BJ (cell line): ENCODE measurements at regions of chr3 and their contacts with region 1.

Region 1: DNA sequence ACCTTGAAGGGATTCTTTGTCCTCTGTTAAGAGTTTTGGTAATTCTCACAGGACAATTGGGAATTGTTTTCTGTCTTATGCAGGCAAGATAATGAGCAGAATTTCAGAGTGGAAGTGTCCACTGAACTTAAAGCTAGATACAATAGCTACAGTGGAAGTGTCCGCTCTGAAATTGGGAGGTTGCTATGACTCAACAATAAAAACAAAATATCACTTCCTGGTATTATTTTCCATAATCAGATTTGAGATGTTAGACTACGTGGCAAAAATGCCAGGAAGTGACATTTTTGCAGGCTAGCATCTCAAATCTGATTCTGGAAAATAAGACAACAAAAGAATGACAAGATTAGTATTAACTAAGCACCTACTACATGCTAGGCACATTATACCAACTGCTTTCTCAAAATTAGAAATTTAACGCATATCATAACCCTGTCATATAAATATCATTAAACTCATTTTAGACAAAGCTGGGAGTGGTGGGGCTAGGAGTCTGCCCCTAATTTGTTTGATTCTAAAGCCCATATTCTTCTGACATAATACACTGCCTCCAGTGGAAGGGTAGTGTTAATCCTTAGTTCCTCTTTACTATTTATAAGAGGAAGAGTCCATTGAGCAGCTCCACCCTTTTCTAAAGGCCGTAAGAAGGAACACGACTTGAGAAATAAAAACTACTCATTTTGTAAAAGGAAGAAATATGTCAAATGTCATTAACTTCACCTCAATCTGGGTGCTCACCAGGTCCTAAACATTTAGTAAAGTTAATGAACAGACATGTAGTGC is 266.9 kb upstream of the STT3B start:
- DNase-seq: no peak
- H3K4me3 ChIP-seq: no peak overlapping the region
- H3K27me3 ChIP-seq: no peaks in the 10 kb centered on the region
- CTCF ChIP-seq: no peak

Region 2: GRCh38 chr3:30760040-30760695 is 505.7 kb before region 1 on chr3:
- CTCF ChIA-PET with region 1: no interaction called
- POLR2A ChIA-PET with region 1: no interaction called
- DNase-seq: no peak
- H3K4me3 ChIP-seq: no peak overlapping the region
- H3K27me3 ChIP-seq: no peaks in the 10 kb centered on the region
- CTCF ChIP-seq: no peak

Region 3: GRCh38 chr3:31253782-31254181 is 12.1 kb before region 1 on chr3:
- CTCF ChIA-PET with region 1: interaction called, 10 read pairs
- POLR2A ChIA-PET with region 1: no interaction called
- DNase-seq: no peak
- H3K4me3 ChIP-seq: no peak overlapping the region
- H3K27me3 ChIP-seq: no peaks in the 10 kb centered on the region
- CTCF ChIP-seq: no peak

Region 4: GRCh38 chr3:31862666-31863279 is 596.9 kb after region 1 on chr3:
- CTCF ChIA-PET with region 1: no interaction called
- POLR2A ChIA-PET with region 1: no interaction called
- DNase-seq: no peak
- H3K4me3 ChIP-seq: no peak overlapping the region
- H3K27me3 ChIP-seq: no peaks in the 10 kb centered on the region
- CTCF ChIP-seq: no peak